Right ventricle myocardium inferior (tissue), 1 donor: ENCODE measurements at regions of chr10 and their contacts with region 1.

Region 1: DNA sequence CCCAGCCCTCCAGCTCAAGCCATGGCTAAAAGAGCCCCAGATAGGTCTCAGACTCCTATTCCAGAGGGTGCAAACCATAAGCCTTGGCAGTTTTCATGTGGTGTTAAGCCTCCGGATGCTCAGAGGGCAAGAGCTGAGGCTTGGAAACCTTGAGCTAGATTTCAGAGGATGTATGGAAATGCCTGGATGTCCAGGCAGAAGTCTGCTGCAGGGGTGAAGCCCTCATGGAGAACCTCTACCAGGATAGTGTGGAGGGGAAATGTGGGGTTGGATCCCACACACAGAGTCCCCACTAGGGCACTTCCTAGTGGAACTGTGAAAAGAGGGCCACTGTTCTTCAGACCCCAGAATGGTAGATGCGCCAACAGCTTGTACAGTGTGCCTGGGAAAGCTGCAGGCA is 13.2 kb upstream of the HPSE2 start:
- DNase-seq: no peak
- ATAC-seq: no peak

Region 2: DNA sequence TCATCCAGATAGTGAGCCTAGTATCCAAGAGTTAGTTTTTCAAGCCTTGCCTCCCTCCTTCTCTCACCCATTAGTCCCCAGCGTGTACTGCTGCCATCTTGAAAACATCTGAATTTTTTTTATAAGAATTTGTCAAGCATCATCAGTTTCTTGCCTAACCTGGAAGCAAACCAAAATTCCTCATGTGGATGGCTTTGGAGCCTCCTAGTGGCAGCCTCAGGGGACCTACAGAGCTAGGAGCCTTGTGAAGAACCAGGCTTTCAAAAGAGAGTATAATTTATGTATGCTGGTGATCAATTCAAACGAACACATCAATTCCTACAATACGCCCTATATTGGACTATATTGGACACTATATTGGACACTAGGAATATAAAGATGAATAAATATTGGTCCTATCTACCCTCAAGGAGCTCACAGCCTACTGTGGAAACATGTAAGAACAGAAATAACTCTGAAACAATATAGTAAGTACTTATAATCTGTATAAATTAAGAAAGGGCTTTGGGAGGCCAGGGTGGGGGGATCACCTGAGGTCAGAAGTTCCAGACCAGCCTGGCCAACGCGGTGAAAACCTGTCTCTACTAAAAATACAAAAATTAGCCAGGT is 76.6 kb before region 1 on chr10:
- intact Hi-C with region 1: no loop called
- DNase-seq: no peak
- ATAC-seq: no peak

Region 3: GRCh38 chr10:99370993-99371392 is 122.2 kb after region 1 on chr10:
- intact Hi-C with region 1: loop called (anchors 5 kb)
- DNase-seq: no peak
- ATAC-seq: no peak